T-cell (primary cell): ENCODE measurements at regions of chr2 and their contacts with region 1.

Region 1: DNA sequence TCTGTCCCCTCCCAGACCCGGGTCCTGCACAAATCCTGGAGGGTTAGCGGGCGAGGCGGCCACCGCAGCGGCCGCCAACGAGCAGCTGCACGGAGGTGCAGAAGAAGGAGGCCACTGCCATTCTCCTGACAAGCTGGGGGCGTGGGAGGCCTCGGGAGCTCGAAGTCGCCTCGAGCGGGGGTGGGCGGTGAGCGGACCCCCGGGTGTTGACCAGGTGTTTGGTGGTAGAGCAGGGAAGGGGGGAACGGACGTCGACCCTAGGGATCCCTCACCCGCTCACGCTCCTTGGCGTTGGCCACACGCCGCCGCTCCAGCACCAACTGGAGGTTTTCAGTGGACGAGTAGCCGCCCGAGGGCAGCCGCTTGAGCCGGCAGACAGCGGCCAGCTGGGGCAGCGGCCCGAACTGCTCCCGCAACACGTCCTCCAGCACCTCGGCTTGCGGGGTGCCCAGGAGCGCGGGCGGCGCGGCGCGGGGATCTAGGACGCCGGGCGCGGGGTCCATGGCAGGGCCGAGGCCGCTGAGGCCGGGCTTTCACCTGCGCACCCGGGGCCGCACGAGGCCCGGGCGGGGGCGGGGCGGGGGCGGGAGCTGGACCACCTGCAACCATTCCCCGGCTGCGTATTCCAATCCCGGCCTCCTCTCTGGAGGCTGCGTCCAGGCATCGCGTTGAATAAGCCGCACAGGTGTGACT is at the start of gene FIGLA:
- DNase-seq: peak in 3 of 35 experiments; percentile 1 to 4 (median 3)
- ATAC-seq: peak in 2 of 4 experiments; percentile 18 to 30
- H3K4me3 ChIP-seq: peak within 1 kb of the TSS; percentile 29 to 72
- H3K4me3 Mint-ChIP-seq: peak within 1 kb of the TSS; percentile 69 to 78 (median 75)
- H3K27ac ChIP-seq: no peak within 1 kb of the TSS
- H3K27ac Mint-ChIP-seq: no peak within 1 kb of the TSS
- H3K4me1 ChIP-seq: peaks cover 6 to 11% of the 10 kb centered on the region in 2 experiments
- H3K4me1 Mint-ChIP-seq: peaks cover 12 to 13% (median 13%) of the 10 kb centered on the region in 3 donors
- H3K27me3 ChIP-seq: peaks cover 17 to 25% of the 10 kb centered on the region in 2 experiments
- H3K27me3 Mint-ChIP-seq: peaks cover 56 to 58% of the 10 kb centered on the region in 2 donors
- total RNA-seq, gene FIGLA: not detected

Region 2: GRCh38 chr2:70748002-70748784 is 42.1 kb before region 1 on chr2:
- CTCF ChIA-PET with region 1: interaction called in 1 of 2 experiments, 15 read pairs
- POLR2A ChIA-PET with region 1: interaction called in 1 of 2 experiments, 8 read pairs
- DNase-seq: no peak
- ATAC-seq: no peak
- H3K4me3 ChIP-seq: no peak overlapping the region
- H3K4me3 Mint-ChIP-seq: no peak overlapping the region
- H3K27ac ChIP-seq: no peak overlapping the region
- H3K27ac Mint-ChIP-seq: no peak overlapping the region
- H3K4me1 ChIP-seq: no peaks in the 10 kb centered on the region
- H3K4me1 Mint-ChIP-seq: no peaks in the 10 kb centered on the region
- H3K27me3 ChIP-seq: peaks cover 0 to 2% of the 10 kb centered on the region in 2 experiments
- H3K27me3 Mint-ChIP-seq: peaks cover 8 to 13% of the 10 kb centered on the region in 2 donors

Region 3: GRCh38 chr2:70887550-70888246 is 97.4 kb after region 1 on chr2:
- CTCF ChIA-PET with region 1: no interaction called
- POLR2A ChIA-PET with region 1: no interaction called
- DNase-seq: peak in 2 of 35 experiments; percentile 14 to 60
- ATAC-seq: peak in 2 of 4 experiments; percentile 35 to 65
- H3K4me3 ChIP-seq: peak overlapping the region; percentile 43 to 74
- H3K4me3 Mint-ChIP-seq: peak overlapping the region; percentile 57 to 82 (median 67)
- H3K27ac ChIP-seq: no peak overlapping the region
- H3K27ac Mint-ChIP-seq: no peak overlapping the region
- H3K4me1 ChIP-seq: peaks cover 9 to 31% of the 10 kb centered on the region in 2 experiments
- H3K4me1 Mint-ChIP-seq: peaks cover 26 to 31% (median 28%) of the 10 kb centered on the region in 3 donors
- H3K27me3 ChIP-seq: peaks cover 26 to 63% of the 10 kb centered on the region in 2 experiments
- H3K27me3 Mint-ChIP-seq: peaks cover 70 to 90% of the 10 kb centered on the region in 2 donors